Mammary epithelial cell (primary cell): ENCODE measurements at regions of chr14 and their contacts with region 1.

Region 1: GRCh38 chr14:97306760-97307246 is 509.6 kb downstream of the VRK1 start:
- DNase-seq: no peak
- H3K4me3 ChIP-seq: no peak overlapping the region
- H3K27ac ChIP-seq: no peak overlapping the region
- H3K4me1 ChIP-seq: no peaks in the 10 kb centered on the region
- H3K27me3 ChIP-seq: no peaks in the 10 kb centered on the region
- CTCF ChIP-seq: no peak

Region 2: GRCh38 chr14:97219431-97220017 is 87.3 kb before region 1 on chr14:
- CTCF ChIA-PET with region 1: no interaction called
- dilution Hi-C with region 1: loop called (anchors 5 kb)
- in situ Hi-C with region 1: no loop called
- intact Hi-C with region 1: no loop called
- DNase-seq: no peak
- H3K4me3 ChIP-seq: no peak overlapping the region
- H3K27ac ChIP-seq: no peak overlapping the region
- H3K4me1 ChIP-seq: no peaks in the 10 kb centered on the region
- H3K27me3 ChIP-seq: peaks cover 2% of the 10 kb centered on the region
- CTCF ChIP-seq: no peak

Region 3: GRCh38 chr14:97251491-97252155 is 55.2 kb before region 1 on chr14:
- CTCF ChIA-PET with region 1: no interaction called
- dilution Hi-C with region 1: loop called (anchors 5 kb)
- in situ Hi-C with region 1: no loop called
- intact Hi-C with region 1: no loop called
- DNase-seq: no peak
- H3K4me3 ChIP-seq: no peak overlapping the region
- H3K27ac ChIP-seq: no peak overlapping the region
- H3K4me1 ChIP-seq: no peaks in the 10 kb centered on the region
- H3K27me3 ChIP-seq: no peaks in the 10 kb centered on the region
- CTCF ChIP-seq: no peak

Region 4: GRCh38 chr14:97994020-97994531 is 687.3 kb after region 1 on chr14:
- CTCF ChIA-PET with region 1: no interaction called
- dilution Hi-C with region 1: no loop called
- in situ Hi-C with region 1: no loop called
- intact Hi-C with region 1: no loop called
- DNase-seq: no peak
- H3K4me3 ChIP-seq: no peak overlapping the region
- H3K27ac ChIP-seq: no peak overlapping the region
- H3K4me1 ChIP-seq: no peaks in the 10 kb centered on the region
- H3K27me3 ChIP-seq: no peaks in the 10 kb centered on the region
- CTCF ChIP-seq: no peak